ENCODE measurements at regions of chr15 and their contacts with region 1.

Region 1: GRCh38 chr15:60751985-60752952 is 273.3 kb upstream of the ICE2 start:
- DNase-seq: peak; percentile 88
- H3K4me3 ChIP-seq: no peak overlapping the region
- H3K27ac ChIP-seq: peak overlapping the region; percentile 76
- H3K27me3 ChIP-seq: no peaks in the 10 kb centered on the region
- CTCF ChIP-seq: no peak

Region 2: GRCh38 chr15:60660290-60661051 is 91.8 kb before region 1 on chr15:
- in situ Hi-C with region 1: loop called (anchors 25 kb)
- DNase-seq: peak; percentile 24
- H3K4me3 ChIP-seq: no peak overlapping the region
- H3K27ac ChIP-seq: no peak overlapping the region
- H3K27me3 ChIP-seq: no peaks in the 10 kb centered on the region
- CTCF ChIP-seq: no peak